ENCODE measurements at regions of chr2 and their contacts with region 1.

Region 1: GRCh38 chr2:31333527-31334183 is 80.9 kb downstream of the XDH start:
- DNase-seq: peak; percentile 84
- ATAC-seq: peak; percentile 90
- H3K4me3 ChIP-seq: no peak overlapping the region
- H3K4me3 Mint-ChIP-seq: no peak overlapping the region
- H3K27ac ChIP-seq: no peak overlapping the region
- H3K27ac Mint-ChIP-seq: no peak overlapping the region
- H3K4me1 ChIP-seq: peaks cover 0 to 9% of the 10 kb centered on the region in 2 donors
- H3K4me1 Mint-ChIP-seq: peaks cover 13% of the 10 kb centered on the region
- H3K27me3 ChIP-seq: peaks cover 0 to 6% (median 2%) of the 10 kb centered on the region in 4 experiments
- H3K27me3 Mint-ChIP-seq: peaks cover 5% of the 10 kb centered on the region
- CTCF ChIP-seq: peak; percentile 98

Region 2: DNA sequence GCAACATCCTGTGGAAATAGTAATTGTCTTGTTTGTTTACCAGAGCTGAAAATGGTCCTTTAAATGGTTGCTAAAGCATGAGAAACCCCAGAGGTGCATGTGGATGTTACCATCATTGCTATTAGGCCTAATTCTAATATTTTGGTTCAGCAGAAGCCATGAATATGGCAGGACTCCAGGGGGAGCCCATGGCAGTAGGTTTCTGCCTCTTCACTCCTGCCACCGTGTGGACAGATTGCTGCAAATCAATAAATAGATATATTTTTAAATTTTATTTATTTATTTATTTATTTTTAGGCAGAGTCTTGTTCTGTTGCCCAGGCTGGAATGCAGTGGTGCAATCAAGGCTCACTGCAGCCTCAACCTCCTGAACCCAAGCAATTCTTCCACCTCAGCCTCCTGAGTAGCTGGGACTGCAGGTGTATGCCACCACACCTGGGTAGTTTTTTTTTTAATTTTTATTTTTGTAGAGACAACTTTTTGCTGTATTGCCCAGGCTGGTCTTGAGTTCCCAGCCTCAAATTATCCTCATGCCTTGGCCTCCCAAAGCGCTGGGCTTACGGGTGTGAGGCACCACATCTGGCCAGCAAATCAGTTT is 471.5 kb before region 1 on chr2:
- CTCF ChIA-PET with region 1: interaction called, 157 read pairs
- POLR2A ChIA-PET with region 1: no interaction called
- intact Hi-C with region 1: loop called (anchors 1 kb)
- DNase-seq: peak; percentile 65
- ATAC-seq: peak; percentile 60
- H3K4me3 ChIP-seq: no peak overlapping the region
- H3K4me3 Mint-ChIP-seq: no peak overlapping the region
- H3K27ac ChIP-seq: no peak overlapping the region
- H3K27ac Mint-ChIP-seq: no peak overlapping the region
- H3K4me1 ChIP-seq: peaks cover 16% of the 10 kb centered on the region in 2 donors
- H3K4me1 Mint-ChIP-seq: peaks cover 17% of the 10 kb centered on the region
- H3K27me3 ChIP-seq: no peaks in the 10 kb centered on the region
- H3K27me3 Mint-ChIP-seq: peaks cover 9% of the 10 kb centered on the region
- CTCF ChIP-seq: peak; percentile 86

Region 3: DNA sequence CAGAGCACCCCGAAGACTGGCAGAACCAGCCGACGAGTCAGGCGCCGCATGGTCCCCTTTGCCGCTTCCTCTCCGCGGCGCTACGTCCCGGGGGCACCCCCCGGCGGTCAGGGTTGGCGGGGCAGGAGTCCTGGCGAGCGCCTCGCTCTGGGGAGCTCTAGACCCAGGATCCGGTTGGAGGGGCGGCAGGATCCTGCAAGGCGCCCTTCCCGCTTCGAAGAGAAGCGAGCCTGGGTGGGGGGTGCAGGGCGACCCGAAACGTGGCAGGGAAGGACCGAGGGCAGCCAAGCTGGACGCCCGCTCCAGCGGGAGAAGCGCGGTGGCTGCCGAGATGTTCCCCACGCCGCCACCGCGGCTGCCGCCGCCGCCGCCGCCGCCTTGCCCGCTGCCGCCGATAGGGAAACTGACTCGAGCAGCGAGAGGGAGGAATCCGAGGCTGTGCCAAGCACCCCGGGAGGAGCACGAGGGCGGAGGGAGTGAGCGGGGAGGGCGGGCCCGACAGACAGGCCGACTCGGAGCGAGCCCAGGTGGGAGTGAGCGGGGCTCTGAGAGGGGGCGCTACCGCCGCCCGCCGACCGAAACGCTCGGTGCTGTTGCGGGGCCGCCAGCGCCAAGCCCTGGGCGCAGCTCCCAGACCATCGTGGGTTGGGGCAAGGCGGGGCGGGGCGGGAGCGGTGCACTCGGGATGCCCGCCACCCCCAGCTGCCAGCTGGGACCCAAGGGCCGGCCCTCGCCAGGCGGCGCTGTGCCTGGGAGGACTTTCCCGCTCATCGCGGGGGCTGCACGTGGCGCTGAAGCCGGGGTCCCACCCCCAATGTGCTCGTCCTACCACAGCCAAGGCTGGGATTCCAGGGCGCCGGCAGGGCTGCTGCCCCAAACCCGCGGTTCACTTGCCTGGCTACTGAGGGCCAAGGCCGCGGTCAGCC is 195.4 kb before region 1 on chr2 and contains the start of gene GALNT14:
- CTCF ChIA-PET with region 1: interaction called, 25 read pairs
- POLR2A ChIA-PET with region 1: no interaction called
- intact Hi-C with region 1: loop called (anchors 1 kb)
- DNase-seq: peak; percentile 77
- ATAC-seq: peak; percentile 78
- H3K4me3 ChIP-seq: peak within 1 kb of the TSS; percentile 56 to 81 (median 60)
- H3K4me3 Mint-ChIP-seq: peak within 1 kb of the TSS; percentile 90
- H3K27ac ChIP-seq: no peak within 1 kb of the TSS
- H3K27ac Mint-ChIP-seq: peak within 1 kb of the TSS; percentile 26
- H3K4me1 ChIP-seq: peaks cover 15 to 16% of the 10 kb centered on the region in 2 donors
- H3K4me1 Mint-ChIP-seq: peaks cover 17% of the 10 kb centered on the region
- H3K27me3 ChIP-seq: peaks cover 0 to 11% (median 7%) of the 10 kb centered on the region in 4 experiments
- H3K27me3 Mint-ChIP-seq: peaks cover 21% of the 10 kb centered on the region
- CTCF ChIP-seq: peak; percentile 60
- total RNA-seq, gene GALNT14: 4.9 and 6.2 TPM in 2 replicates

Region 4: DNA sequence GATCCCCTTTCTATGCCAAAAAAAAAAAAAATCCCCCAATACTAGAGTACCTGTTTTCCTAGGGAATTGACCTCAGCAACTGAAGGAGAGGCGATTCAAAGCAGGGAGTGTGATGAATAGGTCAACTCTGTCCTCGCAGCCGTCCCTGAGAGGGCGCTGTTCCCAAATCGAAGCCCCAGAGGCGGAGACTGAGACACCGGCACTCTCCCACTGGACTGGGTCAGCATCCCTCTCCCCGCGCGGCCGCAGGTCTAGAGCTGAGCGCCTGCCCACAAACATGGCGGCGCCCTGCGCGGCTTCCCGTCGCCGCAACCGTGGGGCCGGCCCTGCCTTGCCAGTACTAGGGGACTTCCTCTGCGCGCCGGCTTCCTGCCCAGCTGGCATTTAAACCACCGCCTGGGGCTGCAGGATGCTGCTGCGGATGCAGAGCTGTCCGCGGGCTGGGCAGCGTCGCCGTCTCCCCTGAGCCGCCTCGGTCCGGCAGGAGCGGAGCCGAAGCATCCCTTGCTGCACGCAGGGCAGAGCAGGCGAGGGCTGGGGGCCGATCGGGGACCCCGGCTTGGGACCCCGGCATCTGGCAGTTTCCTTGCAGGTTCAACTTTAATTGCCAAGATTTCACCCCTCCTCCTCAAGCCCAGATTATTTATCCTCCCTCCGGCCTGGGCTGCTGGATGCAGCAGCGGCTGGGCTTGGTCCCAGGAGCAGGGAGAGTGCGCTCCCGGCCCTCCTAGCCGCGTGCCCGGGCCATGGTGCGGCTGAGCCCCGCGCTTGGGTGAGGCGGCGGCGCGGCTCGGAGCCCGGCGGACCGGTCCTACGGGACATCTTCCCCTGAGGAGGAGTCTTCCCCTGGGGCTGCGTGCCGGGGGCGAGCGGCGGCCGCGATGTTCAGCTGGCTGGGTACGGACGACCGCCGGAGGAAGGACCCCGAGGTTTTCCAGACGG is 99.6 kb before region 1 on chr2 and contains the start of gene EHD3:
- CTCF ChIA-PET with region 1: interaction called, 8 read pairs
- POLR2A ChIA-PET with region 1: no interaction called
- intact Hi-C with region 1: loop called (anchors 2 kb)
- DNase-seq: peak; percentile 86
- ATAC-seq: peak; percentile 97
- H3K4me3 ChIP-seq: peak within 1 kb of the TSS; percentile 46 to 79 (median 70)
- H3K4me3 Mint-ChIP-seq: peak within 1 kb of the TSS; percentile 94
- H3K27ac ChIP-seq: peak within 1 kb of the TSS; percentile 62 to 69
- H3K27ac Mint-ChIP-seq: peak within 1 kb of the TSS; percentile 80
- H3K4me1 ChIP-seq: peaks cover 28 to 35% of the 10 kb centered on the region in 2 donors
- H3K4me1 Mint-ChIP-seq: peaks cover 45% of the 10 kb centered on the region
- H3K27me3 ChIP-seq: no peaks in the 10 kb centered on the region
- H3K27me3 Mint-ChIP-seq: no peaks in the 10 kb centered on the region
- CTCF ChIP-seq: no peak
- total RNA-seq, gene EHD3: 60.4 and 60.5 TPM in 2 replicates

Region 5: DNA sequence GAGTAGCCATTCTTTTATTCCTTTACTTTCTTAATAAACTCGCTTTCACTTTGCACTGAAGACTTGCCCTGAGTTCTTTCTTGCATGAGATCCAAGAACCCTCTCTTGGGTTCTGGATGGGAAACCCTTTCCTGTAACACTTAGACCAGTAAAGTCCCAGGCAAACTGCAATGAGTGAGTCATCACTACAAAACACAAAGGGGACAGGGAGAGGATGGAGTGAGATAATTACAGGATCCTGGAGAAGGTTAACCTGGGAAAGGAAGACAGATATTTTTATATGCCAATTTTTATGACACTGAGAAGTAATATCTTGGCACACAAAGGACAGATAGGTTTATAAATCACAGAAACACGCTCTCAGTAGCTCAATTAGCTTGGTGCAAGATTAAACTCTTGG is 51.0 kb before region 1 on chr2:
- CTCF ChIA-PET with region 1: interaction called, 22 read pairs
- POLR2A ChIA-PET with region 1: no interaction called
- intact Hi-C with region 1: loop called (anchors 5 kb)
- DNase-seq: no peak
- ATAC-seq: no peak
- H3K4me3 ChIP-seq: no peak overlapping the region
- H3K4me3 Mint-ChIP-seq: no peak overlapping the region
- H3K27ac ChIP-seq: no peak overlapping the region
- H3K27ac Mint-ChIP-seq: no peak overlapping the region
- H3K4me1 ChIP-seq: no peaks in the 10 kb centered on the region
- H3K4me1 Mint-ChIP-seq: peaks cover 7% of the 10 kb centered on the region
- H3K27me3 ChIP-seq: no peaks in the 10 kb centered on the region
- H3K27me3 Mint-ChIP-seq: no peaks in the 10 kb centered on the region
- CTCF ChIP-seq: no peak

Region 6: GRCh38 chr2:32484937-32485336 is 1151.3 kb after region 1 on chr2:
- CTCF ChIA-PET with region 1: no interaction called
- POLR2A ChIA-PET with region 1: no interaction called
- intact Hi-C with region 1: no loop called
- DNase-seq: no peak
- ATAC-seq: no peak
- H3K4me3 ChIP-seq: no peak overlapping the region
- H3K4me3 Mint-ChIP-seq: no peak overlapping the region
- H3K27ac ChIP-seq: no peak overlapping the region
- H3K27ac Mint-ChIP-seq: peak overlapping the region; percentile 57
- H3K4me1 ChIP-seq: no peaks in the 10 kb centered on the region
- H3K4me1 Mint-ChIP-seq: no peaks in the 10 kb centered on the region
- H3K27me3 ChIP-seq: no peaks in the 10 kb centered on the region
- H3K27me3 Mint-ChIP-seq: no peaks in the 10 kb centered on the region
- CTCF ChIP-seq: no peak